Endothelial cell of umbilical vein (primary cell): ENCODE measurements at regions of chr7 and their contacts with region 1.

Region 1: DNA sequence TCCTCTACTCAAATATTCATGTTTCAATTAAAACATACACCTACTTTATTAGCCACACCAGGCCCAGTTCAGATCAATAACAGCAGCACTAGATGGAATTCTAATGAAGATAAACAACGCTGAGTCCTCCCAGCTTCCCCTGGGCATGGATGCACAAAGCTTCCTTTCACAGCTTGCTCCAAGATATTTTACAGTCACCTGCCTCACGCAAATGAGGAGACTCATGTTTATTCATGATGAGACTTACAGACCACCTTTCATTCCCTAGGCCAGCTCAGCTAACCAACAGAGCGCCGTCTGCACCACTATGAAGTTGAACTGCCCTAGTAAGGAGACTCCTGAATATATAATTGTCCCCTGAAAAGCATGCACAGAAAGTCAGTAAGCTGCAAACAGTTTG is 283.0 kb upstream of the AOAH start:
- DNase-seq: no peak
- H3K4me3 ChIP-seq: no peak overlapping the region
- H3K27ac ChIP-seq: no peak overlapping the region
- H3K4me1 ChIP-seq: no peaks in the 10 kb centered on the region
- H3K27me3 ChIP-seq: no peaks in the 10 kb centered on the region
- CTCF ChIP-seq: no peak
- POLR2A ChIP-seq: no peak

Region 2: GRCh38 chr7:36535866-36536664 is 471.2 kb before region 1 on chr7:
- CTCF ChIA-PET with region 1: no interaction called
- POLR2A ChIA-PET with region 1: no interaction called
- dilution Hi-C with region 1: no loop called
- intact Hi-C with region 1: no loop called
- DNase-seq: no peak
- H3K4me3 ChIP-seq: no peak overlapping the region
- H3K27ac ChIP-seq: no peak overlapping the region
- H3K4me1 ChIP-seq: no peaks in the 10 kb centered on the region
- H3K27me3 ChIP-seq: no peaks in the 10 kb centered on the region
- CTCF ChIP-seq: no peak
- POLR2A ChIP-seq: no peak

Region 3: GRCh38 chr7:36986429-36987362 is 20.6 kb before region 1 on chr7:
- CTCF ChIA-PET with region 1: interaction called, 11 read pairs
- POLR2A ChIA-PET with region 1: no interaction called
- dilution Hi-C with region 1: no loop called
- intact Hi-C with region 1: no loop called
- DNase-seq: peak; percentile 54
- H3K4me3 ChIP-seq: no peak overlapping the region
- H3K27ac ChIP-seq: no peak overlapping the region
- H3K4me1 ChIP-seq: no peaks in the 10 kb centered on the region
- H3K27me3 ChIP-seq: no peaks in the 10 kb centered on the region
- CTCF ChIP-seq: peak; percentile 86 to 92
- POLR2A ChIP-seq: no peak

Region 4: DNA sequence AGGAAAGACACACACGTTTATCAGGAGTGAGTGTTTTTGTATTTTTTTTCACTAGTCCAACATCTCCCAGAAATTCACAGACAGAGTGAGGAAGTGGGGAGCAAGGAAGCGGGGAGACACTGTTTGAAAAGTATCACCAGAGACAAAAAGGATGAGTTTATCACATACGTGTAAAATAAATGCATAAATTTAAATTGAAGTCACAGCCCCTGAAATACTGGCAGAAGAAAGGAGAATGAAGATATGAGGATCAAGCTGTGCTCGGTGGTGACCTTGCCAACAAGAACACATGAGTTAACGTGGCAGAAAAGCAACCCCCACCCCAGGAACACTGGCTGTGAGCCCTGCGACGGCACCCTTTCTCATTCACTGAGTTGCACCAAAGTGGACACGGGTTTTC is 34.2 kb after region 1 on chr7:
- CTCF ChIA-PET with region 1: no interaction called
- POLR2A ChIA-PET with region 1: no interaction called
- dilution Hi-C with region 1: no loop called
- intact Hi-C with region 1: no loop called
- DNase-seq: no peak
- H3K4me3 ChIP-seq: no peak overlapping the region
- H3K27ac ChIP-seq: no peak overlapping the region
- H3K4me1 ChIP-seq: peaks cover 9% of the 10 kb centered on the region
- H3K27me3 ChIP-seq: no peaks in the 10 kb centered on the region
- CTCF ChIP-seq: no peak
- POLR2A ChIP-seq: no peak